Activated CD4-positive, alpha-beta T cell treated with anti-CD3 and anti-CD28 coated beads for 36 hours (primary cell): ENCODE measurements at regions of chr9 and their contacts with region 1.

Region 1: DNA sequence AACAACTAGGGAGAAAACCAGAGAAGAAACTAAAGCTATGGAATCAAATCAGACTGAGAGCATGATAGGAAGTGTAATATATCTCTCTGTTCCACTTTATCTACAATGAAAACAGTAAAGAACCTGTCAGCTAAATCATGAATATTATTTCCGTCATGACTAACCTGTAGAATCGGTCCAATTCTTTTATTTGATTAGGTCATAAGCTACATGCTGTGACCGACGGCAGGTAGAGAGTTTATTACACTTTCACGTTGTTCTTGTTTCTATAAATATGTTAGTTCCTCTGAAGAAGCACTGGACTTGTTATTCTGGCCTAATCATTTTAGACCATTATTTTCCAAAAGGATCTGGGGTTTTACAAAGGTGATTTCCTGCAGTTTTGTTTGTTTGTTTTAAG is 91.1 kb downstream of the DMRTA1 start:
- DNase-seq: no peak
- ATAC-seq: no peak
- H3K4me3 Mint-ChIP-seq: no peak overlapping the region
- H3K27ac Mint-ChIP-seq: no peak overlapping the region
- H3K4me1 Mint-ChIP-seq: no peaks in the 10 kb centered on the region
- H3K27me3 Mint-ChIP-seq: no peaks in the 10 kb centered on the region

Region 2: GRCh38 chr9:22446950-22447617 is 90.6 kb before region 1 on chr9:
- CTCF ChIA-PET with region 1: no interaction called
- POLR2A ChIA-PET with region 1: no interaction called
- intact Hi-C with region 1: no loop called
- DNase-seq: peak; percentile 63
- ATAC-seq: peak; percentile 85
- H3K4me3 Mint-ChIP-seq: no peak overlapping the region
- H3K27ac Mint-ChIP-seq: no peak overlapping the region
- H3K4me1 Mint-ChIP-seq: peaks cover 5% of the 10 kb centered on the region
- H3K27me3 Mint-ChIP-seq: peaks cover 44% of the 10 kb centered on the region

Region 3: DNA sequence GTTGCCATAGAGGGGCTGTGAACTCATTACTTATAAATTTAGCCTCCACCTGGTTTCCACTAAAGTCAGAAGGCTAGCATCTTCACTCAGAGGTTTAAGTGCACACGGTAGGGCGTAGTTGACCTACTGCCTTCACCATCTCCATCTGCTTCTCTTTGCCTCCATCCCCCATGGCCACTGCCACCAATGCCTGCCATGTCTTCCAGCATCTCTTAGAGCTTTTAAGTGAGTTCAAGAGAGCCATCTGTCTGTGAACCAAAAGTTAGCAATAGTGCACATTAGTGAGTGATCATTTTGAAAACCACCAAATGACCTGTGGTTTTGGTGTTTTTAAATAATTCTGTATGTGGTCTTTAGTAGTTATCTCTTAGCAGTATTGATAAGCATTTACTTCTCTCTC is 10.9 kb after region 1 on chr9:
- CTCF ChIA-PET with region 1: no interaction called
- POLR2A ChIA-PET with region 1: no interaction called
- intact Hi-C with region 1: loop called in 1 of 2 experiments (anchors 1 kb)
- DNase-seq: no peak
- ATAC-seq: no peak
- H3K4me3 Mint-ChIP-seq: no peak overlapping the region
- H3K27ac Mint-ChIP-seq: no peak overlapping the region
- H3K4me1 Mint-ChIP-seq: no peaks in the 10 kb centered on the region
- H3K27me3 Mint-ChIP-seq: no peaks in the 10 kb centered on the region